ENCODE measurements at regions of chr16 and their contacts with region 1.

Region 1: DNA sequence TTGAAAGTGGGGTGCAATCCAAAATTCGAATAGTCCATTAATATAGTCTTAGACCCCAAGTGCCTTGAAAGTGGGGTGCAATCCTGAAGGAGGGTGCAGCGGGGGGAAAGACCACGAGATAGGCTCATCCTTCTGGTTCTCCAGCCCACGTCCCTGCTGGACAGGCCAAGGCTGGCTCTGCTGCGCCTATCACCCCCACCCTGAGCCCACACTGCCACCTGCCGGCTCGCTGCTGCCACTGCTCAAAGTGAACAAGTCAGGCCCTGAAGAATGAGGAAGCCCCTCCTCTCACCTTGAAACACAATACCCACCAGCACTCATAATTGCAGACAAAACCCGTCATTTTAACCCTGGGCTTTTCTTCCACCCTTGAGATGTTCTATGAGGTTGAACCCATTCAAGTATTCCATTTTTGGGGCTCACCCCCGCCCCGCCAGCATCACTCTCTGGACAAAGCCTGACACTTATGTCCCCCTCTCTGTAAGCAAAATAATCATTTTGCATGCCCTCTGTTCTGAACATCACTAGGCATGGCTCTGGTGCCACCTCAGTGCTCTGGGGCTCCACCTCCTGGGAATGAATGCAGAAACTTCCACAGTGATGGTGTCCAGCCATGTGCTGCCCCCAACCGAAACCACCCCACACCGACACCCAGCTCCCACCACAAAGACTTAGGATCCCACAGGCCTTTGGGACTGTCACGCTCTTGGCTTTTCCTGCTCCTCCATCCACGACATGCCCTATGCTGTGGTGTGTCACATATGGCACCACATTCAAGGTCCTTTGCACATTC is 56.8 kb downstream of the BEAN1 start:
- DNase-seq: no peak
- H3K4me3 ChIP-seq: no peak overlapping the region
- CTCF ChIP-seq: peak; percentile 99

Region 2: GRCh38 chr16:66455970-66456369 is 27.9 kb before region 1 on chr16:
- CTCF ChIA-PET with region 1: interaction called, 17 read pairs
- POLR2A ChIA-PET with region 1: no interaction called
- DNase-seq: no peak
- H3K4me3 ChIP-seq: no peak overlapping the region
- CTCF ChIP-seq: no peak